Naive thymus-derived CD4-positive, alpha-beta T cell (primary cell): ENCODE measurements at regions of chr12 and their contacts with region 1.

Region 1: GRCh38 chr12:13100882-13101769 is 2.3 kb downstream of the GSG1 start:
- DNase-seq: peak; percentile 92 to 96 (median 94)
- ATAC-seq: peak; percentile 93
- H3K4me3 ChIP-seq: peak overlapping the region; percentile 68
- H3K4me3 Mint-ChIP-seq: peak overlapping the region; percentile 82 to 87 (median 84)
- H3K27ac ChIP-seq: peak overlapping the region; percentile 92
- H3K27ac Mint-ChIP-seq: peak overlapping the region; percentile 85 to 99 (median 95)
- H3K4me1 ChIP-seq: peaks cover 6 to 32% of the 10 kb centered on the region in 2 donors
- H3K4me1 Mint-ChIP-seq: peaks cover 24 to 49% (median 43%) of the 10 kb centered on the region in 7 donors
- H3K27me3 ChIP-seq: no peaks in the 10 kb centered on the region
- H3K27me3 Mint-ChIP-seq: peaks cover 0 to 5% (median 0%) of the 10 kb centered on the region in 5 donors

Region 2: GRCh38 chr12:12356886-12357718 is 744.0 kb before region 1 on chr12 and contains the start of gene BORCS5:
- CTCF ChIA-PET with region 1: no interaction called
- POLR2A ChIA-PET with region 1: no interaction called
- intact Hi-C with region 1: loop called (anchors 2 to 10 kb)
- DNase-seq: peak; percentile 94 to 99 (median 97)
- ATAC-seq: peak; percentile 96
- H3K4me3 ChIP-seq: peak within 1 kb of the TSS; percentile 85
- H3K4me3 Mint-ChIP-seq: peak within 1 kb of the TSS; percentile 90 to 99 (median 96)
- H3K27ac ChIP-seq: peak within 1 kb of the TSS; percentile 99
- H3K27ac Mint-ChIP-seq: peak within 1 kb of the TSS; percentile 92 to 99 (median 98)
- H3K4me1 ChIP-seq: peaks cover 14 to 28% of the 10 kb centered on the region in 2 donors
- H3K4me1 Mint-ChIP-seq: peaks cover 31 to 74% (median 64%) of the 10 kb centered on the region in 7 donors
- H3K27me3 ChIP-seq: no peaks in the 10 kb centered on the region
- H3K27me3 Mint-ChIP-seq: no peaks in the 10 kb centered on the region
- total RNA-seq, gene BORCS5: 15.3 to 28.2 (median 22.1) TPM

Region 3: GRCh38 chr12:12786716-12787601 is 314.2 kb before region 1 on chr12:
- CTCF ChIA-PET with region 1: interaction called, 3 read pairs
- POLR2A ChIA-PET with region 1: interaction called, 4 read pairs
- intact Hi-C with region 1: loop called (anchors 1 to 5 kb)
- DNase-seq: peak; percentile 62 to 78 (median 72)
- ATAC-seq: peak; percentile 92
- H3K4me3 ChIP-seq: peak overlapping the region; percentile 86
- H3K4me3 Mint-ChIP-seq: peak overlapping the region; percentile 76 to 89 (median 85)
- H3K27ac ChIP-seq: peak overlapping the region; percentile 78
- H3K27ac Mint-ChIP-seq: peak overlapping the region; percentile 62 to 96 (median 88)
- H3K4me1 ChIP-seq: peaks cover 6 to 9% of the 10 kb centered on the region in 2 donors
- H3K4me1 Mint-ChIP-seq: peaks cover 6 to 35% (median 17%) of the 10 kb centered on the region in 7 donors
- H3K27me3 ChIP-seq: no peaks in the 10 kb centered on the region
- H3K27me3 Mint-ChIP-seq: no peaks in the 10 kb centered on the region

Region 4: GRCh38 chr12:13044002-13044905 is 56.9 kb before region 1 on chr12 and contains the start of gene FAM234B:
- CTCF ChIA-PET with region 1: no interaction called
- POLR2A ChIA-PET with region 1: no interaction called
- intact Hi-C with region 1: loop called (anchors 1 to 2 kb)
- DNase-seq: peak; percentile 41 to 77 (median 66)
- ATAC-seq: peak; percentile 95
- H3K4me3 ChIP-seq: peak within 1 kb of the TSS; percentile 89
- H3K4me3 Mint-ChIP-seq: peak within 1 kb of the TSS; percentile 76 to 91 (median 87)
- H3K27ac ChIP-seq: peak within 1 kb of the TSS; percentile 79
- H3K27ac Mint-ChIP-seq: peak within 1 kb of the TSS in 7 of 9 donors; percentile 31 to 79 (median 66)
- H3K4me1 ChIP-seq: peaks cover 0 to 5% of the 10 kb centered on the region in 2 donors
- H3K4me1 Mint-ChIP-seq: peaks cover 5 to 20% (median 14%) of the 10 kb centered on the region in 7 donors
- H3K27me3 ChIP-seq: no peaks in the 10 kb centered on the region
- H3K27me3 Mint-ChIP-seq: peaks cover 0 to 32% (median 5%) of the 10 kb centered on the region in 5 donors
- total RNA-seq, gene FAM234B: 2.7 to 5.8 (median 4.3) TPM

Region 5: GRCh38 chr12:13071305-13072280 is 29.5 kb before region 1 on chr12:
- CTCF ChIA-PET with region 1: no interaction called
- POLR2A ChIA-PET with region 1: no interaction called
- intact Hi-C with region 1: no loop called
- DNase-seq: no peak
- ATAC-seq: no peak
- H3K4me3 ChIP-seq: no peak overlapping the region
- H3K4me3 Mint-ChIP-seq: no peak overlapping the region
- H3K27ac ChIP-seq: no peak overlapping the region
- H3K27ac Mint-ChIP-seq: peak overlapping the region in 1 of 9 donors; percentile 23
- H3K4me1 ChIP-seq: no peaks in the 10 kb centered on the region
- H3K4me1 Mint-ChIP-seq: peaks cover 0 to 7% (median 0%) of the 10 kb centered on the region in 7 donors
- H3K27me3 ChIP-seq: no peaks in the 10 kb centered on the region
- H3K27me3 Mint-ChIP-seq: no peaks in the 10 kb centered on the region

Region 6: GRCh38 chr12:13196130-13196921 is 95.2 kb after region 1 on chr12 and contains the start of gene EMP1:
- CTCF ChIA-PET with region 1: no interaction called
- POLR2A ChIA-PET with region 1: no interaction called
- intact Hi-C with region 1: loop called (anchors 1 kb)
- DNase-seq: peak in 8 of 9 donors; percentile 34 to 78 (median 56)
- ATAC-seq: peak; percentile 89
- H3K4me3 ChIP-seq: peak within 1 kb of the TSS; percentile 18
- H3K4me3 Mint-ChIP-seq: peak within 1 kb of the TSS; percentile 69 to 91 (median 82)
- H3K27ac ChIP-seq: peak within 1 kb of the TSS; percentile 34
- H3K27ac Mint-ChIP-seq: peak within 1 kb of the TSS; percentile 36 to 92 (median 78)
- H3K4me1 ChIP-seq: peaks cover 8 to 11% of the 10 kb centered on the region in 2 donors
- H3K4me1 Mint-ChIP-seq: peaks cover 19 to 41% (median 22%) of the 10 kb centered on the region in 7 donors
- H3K27me3 ChIP-seq: no peaks in the 10 kb centered on the region
- H3K27me3 Mint-ChIP-seq: peaks cover 0 to 42% (median 4%) of the 10 kb centered on the region in 5 donors
- total RNA-seq, gene EMP1: 3.4 to 40.1 (median 4.4) TPM

Region 7: DNA sequence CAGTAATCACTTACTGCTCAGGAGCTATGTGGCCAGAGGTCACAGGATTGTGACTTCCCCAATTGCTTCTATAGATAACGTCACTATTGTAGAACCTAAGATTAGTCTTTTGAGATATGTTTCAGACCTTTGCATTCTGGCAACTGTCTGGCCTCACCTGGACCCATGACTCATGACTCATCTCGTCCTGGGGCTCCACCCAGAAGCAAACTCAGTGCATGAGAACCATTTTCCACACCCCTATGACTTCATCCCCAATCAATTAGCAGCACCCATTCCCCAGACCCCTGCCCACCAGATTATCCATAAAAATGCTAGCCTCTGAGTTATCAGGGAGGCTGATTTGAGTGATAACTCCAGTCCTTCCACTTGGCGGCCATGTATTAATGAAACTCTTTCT is 282.3 kb after region 1 on chr12:
- CTCF ChIA-PET with region 1: no interaction called
- POLR2A ChIA-PET with region 1: no interaction called
- intact Hi-C with region 1: no loop called
- DNase-seq: no peak
- ATAC-seq: no peak
- H3K4me3 ChIP-seq: no peak overlapping the region
- H3K4me3 Mint-ChIP-seq: no peak overlapping the region
- H3K27ac ChIP-seq: no peak overlapping the region
- H3K27ac Mint-ChIP-seq: no peak overlapping the region
- H3K4me1 ChIP-seq: no peaks in the 10 kb centered on the region
- H3K4me1 Mint-ChIP-seq: no peaks in the 10 kb centered on the region
- H3K27me3 ChIP-seq: no peaks in the 10 kb centered on the region
- H3K27me3 Mint-ChIP-seq: peaks cover 0 to 12% (median 8%) of the 10 kb centered on the region in 5 donors

Region 8: GRCh38 chr12:14417715-14418114 is 1316.6 kb after region 1 on chr12:
- CTCF ChIA-PET with region 1: no interaction called
- POLR2A ChIA-PET with region 1: no interaction called
- intact Hi-C with region 1: loop called in 1 of 2 experiments (anchors 10 kb)
- DNase-seq: peak in 8 of 9 donors; percentile 26 to 88 (median 82)
- ATAC-seq: peak; percentile 80
- H3K4me3 ChIP-seq: no peak overlapping the region
- H3K4me3 Mint-ChIP-seq: peak overlapping the region; percentile 73 to 88 (median 83)
- H3K27ac ChIP-seq: peak overlapping the region; percentile 58
- H3K27ac Mint-ChIP-seq: peak overlapping the region; percentile 76 to 94 (median 87)
- H3K4me1 ChIP-seq: peaks cover 37 to 50% of the 10 kb centered on the region in 2 donors
- H3K4me1 Mint-ChIP-seq: peaks cover 40 to 85% (median 76%) of the 10 kb centered on the region in 7 donors
- H3K27me3 ChIP-seq: no peaks in the 10 kb centered on the region
- H3K27me3 Mint-ChIP-seq: no peaks in the 10 kb centered on the region